ENCODE measurements at regions of chr11 and their contacts with region 1.

Region 1: DNA sequence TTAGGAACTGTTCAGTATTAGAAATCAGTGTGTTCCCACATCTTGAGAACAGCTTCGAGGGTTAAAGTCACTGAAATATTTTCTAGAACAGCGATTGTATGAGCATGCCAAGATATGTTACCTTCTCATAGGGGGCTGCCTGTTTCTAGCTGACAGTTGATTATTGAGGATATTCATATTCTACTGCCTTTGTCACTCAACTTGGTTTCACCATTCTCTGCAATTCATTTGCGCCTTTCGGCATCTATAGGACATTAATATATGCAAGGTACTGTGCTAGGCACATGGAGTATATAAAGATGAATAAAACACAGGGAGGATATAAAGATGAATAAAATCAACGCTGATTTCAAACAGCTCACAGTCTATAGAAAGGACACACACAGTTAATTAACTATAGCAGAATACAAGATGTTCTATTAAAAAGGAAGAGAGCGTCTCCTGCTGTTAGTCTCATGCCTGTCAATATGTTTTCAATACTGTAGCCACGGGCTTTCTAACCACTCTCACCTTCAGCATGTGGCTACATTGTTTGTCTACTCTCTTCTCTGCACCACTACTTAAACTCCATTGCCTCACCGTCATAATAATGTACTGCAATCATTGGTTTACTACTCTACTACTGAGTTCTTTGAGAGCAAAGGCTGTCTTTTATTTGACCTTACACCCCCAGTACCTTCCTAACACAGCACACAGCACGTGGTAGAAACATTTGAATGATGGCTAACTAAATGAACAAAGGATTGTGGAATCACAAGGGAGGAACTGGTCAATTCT is 81.9 kb downstream of the RAB30 start:
- DNase-seq: no peak
- ATAC-seq: peak; percentile 18; the same call in 1 of the 3 replicates
- H3K4me3 ChIP-seq: no peak overlapping the region
- H3K27ac ChIP-seq: no peak overlapping the region
- H3K4me1 ChIP-seq: peaks cover 2 to 25% of the 10 kb centered on the region in 2 experiments; a peak in 3 of 5 replicates
- H3K27me3 ChIP-seq: no peaks in the 10 kb centered on the region
- CTCF ChIP-seq: peak in 1 of 3 experiments; percentile 32; a peak in 2 of 6 replicates
- EP300 ChIP-seq: no peak
- POLR2A ChIP-seq: no peak
- RAD21 ChIP-seq: 0 out of 4 replicates have a peak, but pooled peaks have one; percentile 8 to 28

Region 2: DNA sequence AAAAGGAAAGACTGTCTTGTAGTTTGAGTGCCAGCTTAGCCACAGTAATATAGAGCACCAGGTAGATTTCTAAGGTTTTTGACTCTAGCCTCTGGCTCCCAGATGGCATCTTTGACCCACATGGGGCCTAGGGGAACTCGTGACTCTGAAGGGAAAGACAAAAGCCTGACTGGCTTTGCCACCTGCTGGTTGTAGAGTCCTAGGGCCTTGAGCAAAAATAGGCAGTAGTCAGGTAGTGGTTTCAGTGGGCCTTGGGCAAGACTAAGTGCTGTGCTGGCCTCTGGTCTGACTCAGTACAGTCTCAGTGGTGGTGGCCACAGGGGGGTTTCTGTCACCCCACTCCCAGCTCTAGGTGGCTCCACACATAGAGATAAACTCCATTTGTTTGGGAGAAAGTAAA is 605.5 kb before region 1 on chr11:
- CTCF ChIA-PET with region 1: no interaction called
- POLR2A ChIA-PET with region 1: no interaction called
- in situ Hi-C with region 1: no loop called
- intact Hi-C with region 1: no loop called
- DNase-seq: no peak
- ATAC-seq: no peak
- H3K4me3 ChIP-seq: no peak overlapping the region
- H3K27ac ChIP-seq: no peak overlapping the region
- H3K4me1 ChIP-seq: no peaks in the 10 kb centered on the region
- H3K27me3 ChIP-seq: no peaks in the 10 kb centered on the region
- CTCF ChIP-seq: no peak
- EP300 ChIP-seq: no peak
- POLR2A ChIP-seq: no peak
- RAD21 ChIP-seq: no peak

Region 3: GRCh38 chr11:83057721-83058120 is 67.9 kb after region 1 on chr11:
- CTCF ChIA-PET with region 1: no interaction called
- POLR2A ChIA-PET with region 1: no interaction called
- in situ Hi-C with region 1: no loop called
- intact Hi-C with region 1: loop called (anchors 2 kb)
- DNase-seq: no peak
- ATAC-seq: no peak
- H3K4me3 ChIP-seq: no peak overlapping the region
- H3K27ac ChIP-seq: no peak overlapping the region
- H3K4me1 ChIP-seq: no peaks in the 10 kb centered on the region; a peak in 1 of 5 replicates
- H3K27me3 ChIP-seq: peaks cover 0 to 3% of the 10 kb centered on the region in 2 experiments; a peak in 1 of 5 replicates
- CTCF ChIP-seq: no peak
- EP300 ChIP-seq: no peak
- POLR2A ChIP-seq: no peak
- RAD21 ChIP-seq: no peak

Region 4: GRCh38 chr11:83235825-83236224 is 246.0 kb after region 1 on chr11:
- CTCF ChIA-PET with region 1: no interaction called
- POLR2A ChIA-PET with region 1: no interaction called
- in situ Hi-C with region 1: no loop called
- intact Hi-C with region 1: no loop called
- DNase-seq: no peak
- ATAC-seq: no peak
- H3K4me3 ChIP-seq: no peak overlapping the region
- H3K27ac ChIP-seq: no peak overlapping the region
- H3K4me1 ChIP-seq: no peaks in the 10 kb centered on the region
- H3K27me3 ChIP-seq: no peaks in the 10 kb centered on the region
- CTCF ChIP-seq: no peak
- EP300 ChIP-seq: no peak
- POLR2A ChIP-seq: no peak
- RAD21 ChIP-seq: no peak